Activated T-helper 2 cell treated with anti-CD3 and anti-CD28 coated beads, Interferon-gamma antibody, Interleukin-2, Interleukin-4, amounts not matched to agents 10 μg/mL and 5 μg/mL and 100 μg/mL, durations not matched to agents 14 hours and 24 hours and 36 hours (primary cell): ENCODE measurements at regions of chr5 and their contacts with region 1.

Region 1: DNA sequence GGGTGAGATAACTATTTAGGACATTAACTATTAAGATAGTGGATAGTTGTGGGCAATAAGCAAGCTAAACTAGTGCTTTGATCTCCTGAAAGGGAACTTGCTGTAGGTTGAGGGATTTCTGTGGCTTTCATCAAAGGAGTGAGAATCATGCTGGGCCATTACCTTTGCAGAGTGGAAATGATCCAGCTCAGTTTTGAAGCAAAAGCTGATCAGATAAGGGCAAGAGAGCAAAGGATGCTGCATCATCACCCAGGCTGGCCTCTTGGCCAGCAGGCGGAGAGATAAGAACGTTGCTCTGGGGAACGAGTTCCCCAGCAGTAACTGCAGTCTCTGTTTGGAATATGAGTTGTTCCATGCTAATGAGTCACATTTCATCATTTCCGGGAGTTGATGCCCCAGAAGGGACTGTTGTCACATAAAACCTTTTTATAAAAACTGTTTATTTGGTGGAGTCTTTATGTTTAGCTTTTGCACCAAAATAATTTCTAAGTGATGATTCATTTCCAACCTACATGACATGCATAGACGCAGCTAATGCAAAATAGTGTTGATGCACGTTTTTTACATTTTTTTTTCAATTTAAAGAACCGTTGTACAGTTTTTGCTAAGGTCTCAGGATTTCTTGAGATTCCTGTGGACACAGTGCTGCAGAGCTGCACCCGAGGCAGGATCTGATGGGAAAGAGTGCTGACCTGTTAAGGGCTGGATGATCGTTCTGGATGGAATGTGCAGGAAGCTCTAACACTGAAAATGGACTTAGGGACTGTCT is 99.3 kb downstream of the ACTBL2 start:
- DNase-seq: peak; percentile 46
- H3K4me3 Mint-ChIP-seq: no peak overlapping the region
- H3K27ac Mint-ChIP-seq: peak overlapping the region; percentile 19
- H3K4me1 Mint-ChIP-seq: peaks cover 18% of the 10 kb centered on the region
- H3K27me3 Mint-ChIP-seq: peaks cover 2% of the 10 kb centered on the region

Region 2: GRCh38 chr5:57327561-57328394 is 55.5 kb before region 1 on chr5:
- intact Hi-C with region 1: loop called (anchors 2 kb)
- DNase-seq: no peak
- H3K4me3 Mint-ChIP-seq: no peak overlapping the region
- H3K27ac Mint-ChIP-seq: peak overlapping the region; percentile 42
- H3K4me1 Mint-ChIP-seq: peaks cover 21% of the 10 kb centered on the region
- H3K27me3 Mint-ChIP-seq: peaks cover 5% of the 10 kb centered on the region

Region 3: DNA sequence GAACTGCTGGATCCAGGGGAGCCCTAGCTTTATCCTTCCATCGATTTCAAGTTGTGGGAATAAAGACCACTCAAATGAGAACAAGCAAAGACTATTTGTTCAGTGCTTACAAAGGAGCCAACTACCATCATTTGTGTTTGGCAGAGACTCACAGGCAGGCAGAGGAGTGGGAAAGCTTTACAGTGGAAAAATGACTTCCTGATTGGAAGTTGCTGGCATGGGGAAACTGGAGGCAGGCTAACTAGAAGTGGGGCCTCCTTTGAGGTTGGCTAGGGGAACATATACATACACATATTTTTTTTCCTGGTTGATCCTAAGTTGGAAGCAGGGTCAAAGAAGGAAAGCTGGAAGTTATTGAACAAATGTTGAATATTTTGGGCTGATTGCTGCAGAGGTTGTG is 22.4 kb before region 1 on chr5:
- intact Hi-C with region 1: no loop called
- DNase-seq: no peak
- H3K4me3 Mint-ChIP-seq: no peak overlapping the region
- H3K27ac Mint-ChIP-seq: no peak overlapping the region
- H3K4me1 Mint-ChIP-seq: peaks cover 2% of the 10 kb centered on the region
- H3K27me3 Mint-ChIP-seq: peaks cover 1% of the 10 kb centered on the region

Region 4: DNA sequence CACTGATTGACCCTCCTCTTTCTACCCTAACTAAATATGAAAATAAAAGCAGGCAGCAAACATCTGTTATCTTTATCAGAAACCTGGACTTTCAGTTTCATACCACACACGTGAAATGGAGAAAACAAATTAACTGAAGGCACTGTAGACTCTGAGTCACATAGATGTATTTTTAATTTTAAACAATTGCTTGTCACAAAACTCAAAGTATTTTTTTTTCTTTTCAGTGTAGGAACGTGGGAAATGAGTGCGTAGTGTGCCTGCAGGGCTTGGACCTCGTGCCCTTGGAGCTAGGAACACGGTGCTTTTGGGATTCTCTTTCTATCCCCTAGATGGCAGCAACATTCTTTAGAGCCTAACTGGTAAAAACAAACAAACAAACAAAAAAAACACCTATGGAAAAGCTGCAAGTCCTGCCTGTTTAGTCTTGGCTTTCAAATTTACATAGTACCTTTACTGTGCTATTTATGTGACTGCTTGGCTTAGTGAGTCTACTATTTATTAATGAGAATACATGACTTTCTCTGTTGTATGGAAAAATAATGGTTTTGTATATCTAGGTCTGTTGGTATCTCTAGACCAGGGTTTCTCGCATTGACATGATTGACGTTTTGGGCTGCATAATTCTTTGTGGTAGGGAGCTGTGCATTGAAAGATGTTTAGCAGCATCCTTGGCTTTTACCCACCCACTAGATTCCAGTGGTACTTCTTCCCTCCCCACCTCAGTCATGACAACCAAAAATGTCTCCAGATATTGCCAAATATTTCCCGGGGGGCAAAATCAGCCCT is 116.2 kb after region 1 on chr5:
- intact Hi-C with region 1: loop called (anchors 1 kb)
- DNase-seq: peak; percentile 20
- H3K4me3 Mint-ChIP-seq: peak overlapping the region; percentile 37
- H3K27ac Mint-ChIP-seq: peak overlapping the region; percentile 60
- H3K4me1 Mint-ChIP-seq: peaks cover 54% of the 10 kb centered on the region
- H3K27me3 Mint-ChIP-seq: peaks cover 4% of the 10 kb centered on the region